ENCODE measurements at regions of chr16 and their contacts with region 1.

Region 1: DNA sequence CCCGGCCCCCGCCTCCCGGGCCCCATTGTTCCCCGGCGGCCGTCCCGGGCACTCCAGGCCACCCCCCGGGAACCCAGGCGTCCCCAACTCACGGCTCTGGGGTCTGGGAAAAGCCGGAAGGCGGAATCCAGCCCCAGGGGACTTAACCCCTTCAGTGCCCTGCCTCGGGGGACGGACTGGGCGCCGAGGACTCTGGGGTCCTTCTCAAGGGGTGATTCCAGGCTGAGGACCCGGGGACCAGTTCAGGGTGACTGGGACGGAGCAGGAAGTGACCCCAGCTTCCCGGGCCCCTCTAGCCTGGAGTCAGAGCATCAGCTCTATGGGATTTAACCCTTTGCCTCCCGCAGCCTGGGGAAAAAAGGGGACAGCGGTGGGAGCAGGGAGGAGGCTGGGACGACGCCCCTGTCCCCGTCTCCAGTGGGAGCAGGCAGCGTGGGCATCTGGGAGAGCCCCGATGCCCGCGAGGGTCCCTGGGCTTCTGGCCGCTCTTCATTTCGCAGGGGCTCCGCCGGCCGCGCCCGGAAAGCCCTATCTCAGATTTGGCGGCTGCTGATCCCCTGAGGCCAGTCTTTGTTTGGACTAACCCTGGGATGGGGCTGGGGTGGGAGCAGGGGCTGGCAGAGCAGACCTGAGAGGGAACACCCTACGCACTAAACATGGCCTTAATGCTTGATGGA is at the start of gene ZNF629:
- DNase-seq: peak; percentile 45
- H3K4me3 ChIP-seq: peak within 1 kb of the TSS; percentile 70 to 91 (median 91)
- H3K27ac ChIP-seq: peak within 1 kb of the TSS; percentile 89
- H3K4me1 ChIP-seq: peaks cover 14% of the 10 kb centered on the region
- H3K27me3 ChIP-seq: no peaks in the 10 kb centered on the region
- CTCF ChIP-seq: no peak
- POLR2A ChIP-seq: no peak
- total RNA-seq, gene ZNF629: 11.2 and 11.7 TPM in 2 replicates

Region 2: DNA sequence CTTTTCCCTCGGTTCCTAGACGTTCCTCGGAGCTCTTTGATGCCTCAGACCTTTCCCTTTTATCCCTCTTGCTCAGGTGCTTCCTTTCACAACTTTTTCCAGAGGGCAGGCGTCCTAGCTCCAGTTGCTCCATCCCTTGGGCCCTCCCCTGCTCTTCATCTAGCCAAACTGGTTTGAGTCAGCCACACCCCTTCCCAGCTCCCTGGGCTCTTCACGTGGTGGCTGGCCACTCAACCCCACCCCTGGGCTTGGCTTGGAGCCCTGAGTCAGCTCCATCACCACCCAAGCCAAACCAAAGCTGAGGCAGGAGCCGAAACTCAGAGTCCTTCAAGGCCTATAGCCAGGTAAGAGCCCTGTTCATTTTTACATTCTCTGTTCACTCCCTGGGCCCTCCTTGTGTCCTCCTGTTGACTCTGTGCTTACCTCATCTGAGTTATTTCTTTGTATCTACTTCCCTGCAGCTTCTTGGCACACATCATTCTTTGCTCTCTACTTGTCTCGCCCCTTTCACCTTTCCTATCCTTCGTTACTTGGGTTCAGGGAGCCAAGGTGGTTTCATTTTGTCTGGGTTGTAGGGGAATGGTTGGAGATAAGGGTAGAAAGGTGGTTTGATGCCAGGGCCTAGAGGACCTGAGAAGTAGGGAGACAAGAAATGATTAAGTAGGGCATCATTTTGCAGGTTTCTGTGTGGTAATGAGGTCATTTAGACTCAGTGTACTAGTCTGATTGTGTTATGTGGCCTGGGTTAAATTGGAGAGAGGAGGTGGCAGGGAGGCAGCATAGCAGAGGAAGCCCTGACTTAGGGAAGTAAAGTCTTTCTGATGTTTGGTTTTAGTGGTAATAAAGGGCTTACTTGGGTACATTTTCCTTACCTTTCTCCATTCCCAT is 46.5 kb before region 1 on chr16:
- CTCF ChIA-PET with region 1: no interaction called
- POLR2A ChIA-PET with region 1: no interaction called
- dilution Hi-C with region 1: no loop called
- intact Hi-C with region 1: no loop called
- DNase-seq: peak; percentile 19
- H3K4me3 ChIP-seq: no peak overlapping the region
- H3K27ac ChIP-seq: peak overlapping the region; percentile 83
- H3K4me1 ChIP-seq: peaks cover 20% of the 10 kb centered on the region
- H3K27me3 ChIP-seq: no peaks in the 10 kb centered on the region
- CTCF ChIP-seq: no peak
- POLR2A ChIP-seq: no peak

Region 3: GRCh38 chr16:30764086-30764485 is 23.0 kb before region 1 on chr16:
- CTCF ChIA-PET with region 1: no interaction called
- POLR2A ChIA-PET with region 1: no interaction called
- dilution Hi-C with region 1: no loop called
- intact Hi-C with region 1: no loop called
- DNase-seq: no peak
- H3K4me3 ChIP-seq: no peak overlapping the region
- H3K27ac ChIP-seq: no peak overlapping the region
- H3K4me1 ChIP-seq: peaks cover 15% of the 10 kb centered on the region
- H3K27me3 ChIP-seq: no peaks in the 10 kb centered on the region
- CTCF ChIP-seq: no peak
- POLR2A ChIP-seq: no peak

Region 4: GRCh38 chr16:30775392-30776188 is 11.5 kb before region 1 on chr16:
- CTCF ChIA-PET with region 1: no interaction called
- POLR2A ChIA-PET with region 1: no interaction called
- dilution Hi-C with region 1: no loop called
- intact Hi-C with region 1: loop called (anchors 1 kb)
- DNase-seq: peak; percentile 77
- H3K4me3 ChIP-seq: peak overlapping the region; percentile 20 to 62 (median 56)
- H3K27ac ChIP-seq: peak overlapping the region; percentile 26
- H3K4me1 ChIP-seq: peaks cover 8% of the 10 kb centered on the region
- H3K27me3 ChIP-seq: no peaks in the 10 kb centered on the region
- CTCF ChIP-seq: no peak
- POLR2A ChIP-seq: peak; percentile 88

Region 5: GRCh38 chr16:30805370-30806169 is 18.5 kb after region 1 on chr16:
- CTCF ChIA-PET with region 1: interaction called, 20 read pairs
- POLR2A ChIA-PET with region 1: interaction called, 15 read pairs
- dilution Hi-C with region 1: no loop called
- intact Hi-C with region 1: loop called (anchors 1 kb)
- DNase-seq: peak; percentile 74
- H3K4me3 ChIP-seq: peak overlapping the region; percentile 18 to 57 (median 37)
- H3K27ac ChIP-seq: peak overlapping the region; percentile 18
- H3K4me1 ChIP-seq: peaks cover 8% of the 10 kb centered on the region
- H3K27me3 ChIP-seq: no peaks in the 10 kb centered on the region
- CTCF ChIP-seq: peak in 1 of 2 donors; percentile 3
- POLR2A ChIP-seq: peak; percentile 88

Region 6: DNA sequence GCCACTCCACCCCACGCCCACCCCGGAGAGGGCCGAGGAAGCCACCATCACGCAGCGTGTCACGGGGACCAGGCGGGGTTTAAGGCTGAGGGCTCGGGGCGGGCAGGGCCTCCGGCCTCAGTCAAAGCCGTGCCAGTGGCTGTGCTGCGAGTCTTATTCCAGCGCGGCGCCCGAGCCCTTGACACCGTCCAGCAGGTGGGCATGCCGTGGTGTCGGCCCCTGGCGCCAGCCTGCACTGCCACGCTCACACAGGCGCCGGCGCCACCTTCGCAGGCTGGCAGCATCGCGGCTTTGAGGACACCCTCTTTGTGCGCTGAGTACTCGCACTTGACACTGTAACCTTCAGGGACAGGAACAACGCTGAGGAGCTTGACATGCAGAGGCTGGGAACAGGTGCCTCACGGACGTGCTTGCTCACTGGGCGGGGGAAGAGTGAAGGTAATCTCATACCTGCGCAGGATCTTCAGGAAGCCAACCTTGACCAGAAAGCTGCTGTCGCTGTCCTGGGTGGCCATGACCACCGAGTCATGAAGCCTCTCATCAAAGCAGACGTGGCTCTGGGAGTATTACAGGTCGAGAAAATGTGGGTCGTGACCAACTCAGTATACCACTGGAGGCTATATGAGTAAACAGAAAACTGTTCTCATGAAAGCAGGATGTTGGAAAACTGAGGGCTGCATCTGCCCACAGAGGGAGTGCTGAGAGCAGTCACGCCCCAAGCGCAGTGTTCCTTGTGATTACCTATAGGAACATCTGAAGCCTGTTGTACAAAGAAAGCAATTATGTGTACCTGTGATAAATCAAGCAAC is 34.1 kb after region 1 on chr16:
- CTCF ChIA-PET with region 1: no interaction called
- POLR2A ChIA-PET with region 1: no interaction called
- dilution Hi-C with region 1: no loop called
- intact Hi-C with region 1: no loop called
- DNase-seq: no peak
- H3K4me3 ChIP-seq: no peak overlapping the region
- H3K27ac ChIP-seq: no peak overlapping the region
- H3K4me1 ChIP-seq: no peaks in the 10 kb centered on the region
- H3K27me3 ChIP-seq: no peaks in the 10 kb centered on the region
- CTCF ChIP-seq: no peak
- POLR2A ChIP-seq: no peak